ENCODE measurements at regions of chr14 and their contacts with region 1.

Region 1: DNA sequence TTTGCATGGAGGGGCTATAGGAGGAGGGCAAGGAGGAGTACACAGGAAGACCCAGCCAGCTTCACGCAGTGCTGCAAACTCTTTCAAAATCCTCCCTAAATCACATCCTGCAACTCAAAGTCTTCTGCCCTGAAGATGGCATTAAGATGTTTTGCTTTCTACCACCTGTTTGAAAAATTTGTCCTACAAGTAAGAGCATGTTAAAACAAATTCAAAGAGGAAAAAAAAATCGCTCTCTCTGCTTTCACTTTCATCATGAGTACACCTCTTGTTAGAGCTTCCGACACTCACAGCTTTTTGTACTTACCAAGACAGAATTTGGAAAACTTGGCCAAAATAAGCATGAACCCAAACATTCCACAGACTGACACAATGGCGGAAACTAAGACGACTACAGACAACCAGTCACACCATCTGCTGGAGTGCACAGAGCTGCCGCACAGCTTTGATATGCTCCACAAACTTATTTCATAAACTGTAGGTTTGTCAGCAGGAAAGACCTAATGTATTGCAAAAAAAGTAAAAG is 21.3 kb downstream of the GCH1 start:
- DNase-seq: peak in 1 of 2 donors; percentile 74
- H3K4me3 ChIP-seq: no peak overlapping the region
- CTCF ChIP-seq: no peak
- POLR2A ChIP-seq: no peak

Region 2: GRCh38 chr14:53167602-53168328 is 1713.5 kb before region 1 on chr14:
- intact Hi-C with region 1: no loop called
- DNase-seq: peak in 1 of 2 donors; percentile 38
- H3K4me3 ChIP-seq: no peak overlapping the region
- CTCF ChIP-seq: no peak
- POLR2A ChIP-seq: no peak

Region 3: DNA sequence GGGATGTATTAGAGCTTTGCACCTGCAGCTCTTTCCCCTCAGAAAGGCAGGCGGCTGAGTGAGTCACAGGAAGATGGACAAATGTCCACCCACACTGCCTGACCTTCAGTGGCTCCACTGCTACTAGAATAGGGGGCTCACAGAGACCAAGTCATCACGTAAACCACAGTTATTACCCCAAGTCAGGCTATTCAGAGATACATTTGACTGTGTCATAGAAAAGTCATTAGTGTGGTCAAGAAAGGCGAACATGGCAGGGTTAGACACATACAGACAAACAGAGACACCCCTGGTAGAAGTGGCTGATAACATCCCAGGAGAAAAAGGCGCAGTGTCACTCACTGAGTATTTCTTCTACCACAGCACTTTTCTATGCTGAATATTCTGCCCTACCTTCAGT is 14.7 kb before region 1 on chr14:
- intact Hi-C with region 1: loop called (anchors 2 kb)
- DNase-seq: no peak
- H3K4me3 ChIP-seq: no peak overlapping the region
- CTCF ChIP-seq: no peak
- POLR2A ChIP-seq: no peak

Region 4: DNA sequence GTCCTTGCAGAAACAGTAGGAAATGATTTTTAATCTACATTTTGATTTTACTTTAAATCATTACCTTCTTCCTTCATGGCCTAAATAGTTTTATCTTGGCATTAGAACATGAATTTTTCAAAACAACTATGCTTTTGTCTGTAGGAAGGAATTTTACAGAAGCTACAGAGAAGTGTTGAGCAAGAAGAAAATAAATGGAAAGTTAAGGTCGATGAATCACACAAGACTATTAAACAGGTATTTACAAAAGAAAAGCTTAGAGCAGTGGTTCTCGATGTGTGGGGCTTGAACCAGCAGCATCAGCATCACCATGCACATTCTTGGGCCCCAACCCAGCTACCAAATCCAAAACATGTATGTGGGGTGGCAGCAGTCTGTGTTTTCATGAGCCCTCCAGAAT is 790.3 kb after region 1 on chr14:
- intact Hi-C with region 1: no loop called
- DNase-seq: no peak
- H3K4me3 ChIP-seq: no peak overlapping the region
- CTCF ChIP-seq: no peak
- POLR2A ChIP-seq: no peak